GM13977 (cell line): ENCODE measurements at regions of chr1 and their contacts with region 1.

Region 1: DNA sequence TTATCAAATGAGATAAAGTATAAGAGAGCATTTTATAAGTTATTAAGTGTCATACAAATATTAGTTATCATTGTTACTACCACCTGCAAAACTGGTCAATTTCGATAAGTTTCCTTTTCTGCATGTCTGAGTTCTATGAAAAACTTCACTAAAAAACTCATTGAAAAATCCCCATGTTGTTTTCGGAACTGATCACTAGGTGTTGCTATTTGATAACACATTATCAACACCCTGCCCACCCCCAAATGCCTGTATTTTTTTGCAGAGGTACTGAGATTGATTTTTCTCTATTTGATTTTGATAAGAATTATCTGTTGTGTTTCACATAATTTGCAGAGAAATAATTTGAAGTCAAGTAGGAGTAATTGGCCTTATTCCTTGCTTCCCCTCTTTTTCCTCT is 22.1 kb upstream of the DISP1 start:
- DNase-seq: peak; percentile 44
- CTCF ChIP-seq: peak; percentile 37

Region 2: DNA sequence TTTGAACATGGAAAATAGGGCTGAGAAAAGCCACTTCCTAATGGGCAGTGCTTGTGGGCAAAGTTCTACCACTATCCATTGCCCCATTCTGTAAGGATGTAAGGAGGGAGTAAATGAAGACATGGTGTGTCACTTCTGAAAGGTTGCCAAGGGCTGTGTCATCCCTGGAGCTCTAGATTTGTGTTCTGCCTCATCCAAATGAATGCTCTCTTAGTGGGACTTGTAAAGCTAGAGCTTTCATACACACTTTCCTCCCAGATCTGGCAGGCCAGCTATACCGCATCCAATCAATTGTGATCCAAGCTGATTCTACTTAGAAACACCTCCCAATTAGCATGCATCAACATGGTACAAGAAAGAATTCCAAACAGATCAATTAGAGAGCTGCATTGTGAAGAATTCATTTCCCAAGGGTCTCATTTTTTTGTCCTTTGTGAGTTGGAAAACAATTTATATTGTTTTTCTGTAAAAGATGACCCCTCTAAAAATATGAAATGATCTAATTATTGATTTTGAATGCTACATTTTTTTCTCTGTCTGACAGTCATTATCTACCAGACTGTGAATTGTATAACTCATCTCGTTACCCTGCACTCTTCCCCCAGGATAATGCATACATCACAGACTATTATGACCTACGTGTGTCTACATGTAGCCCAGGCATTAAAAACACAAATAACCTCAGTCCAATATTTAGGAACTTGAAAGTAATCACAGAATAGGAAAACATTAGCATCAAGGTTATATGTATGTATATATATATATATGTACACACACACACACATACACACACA is 933.7 kb before region 1 on chr1:
- in situ Hi-C with region 1: no loop called
- DNase-seq: no peak
- CTCF ChIP-seq: no peak

Region 3: GRCh38 chr1:222600281-222600680 is 192.5 kb before region 1 on chr1:
- in situ Hi-C with region 1: no loop called
- DNase-seq: no peak
- CTCF ChIP-seq: no peak

Region 4: DNA sequence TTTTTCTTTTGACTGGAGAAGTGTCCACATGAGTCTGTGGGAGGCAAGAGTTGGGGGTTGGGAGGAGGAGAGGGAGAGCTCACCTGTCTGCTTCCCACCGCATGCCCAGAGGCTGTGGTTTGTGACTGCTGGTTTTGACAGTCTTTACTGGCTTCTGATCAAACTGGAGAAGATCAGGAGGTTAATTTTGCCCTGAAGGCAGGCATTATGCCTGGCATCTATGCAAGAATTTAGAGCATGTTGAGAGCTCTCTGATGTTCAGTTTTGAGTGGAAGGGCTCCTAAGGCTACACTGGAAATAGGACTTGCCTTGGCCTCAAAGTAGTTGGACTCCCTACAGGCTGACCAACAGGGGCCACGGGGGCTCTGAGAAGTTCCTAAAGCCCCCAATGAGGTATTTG is 248.7 kb after region 1 on chr1:
- in situ Hi-C with region 1: no loop called
- DNase-seq: no peak
- CTCF ChIP-seq: no peak

Region 5: DNA sequence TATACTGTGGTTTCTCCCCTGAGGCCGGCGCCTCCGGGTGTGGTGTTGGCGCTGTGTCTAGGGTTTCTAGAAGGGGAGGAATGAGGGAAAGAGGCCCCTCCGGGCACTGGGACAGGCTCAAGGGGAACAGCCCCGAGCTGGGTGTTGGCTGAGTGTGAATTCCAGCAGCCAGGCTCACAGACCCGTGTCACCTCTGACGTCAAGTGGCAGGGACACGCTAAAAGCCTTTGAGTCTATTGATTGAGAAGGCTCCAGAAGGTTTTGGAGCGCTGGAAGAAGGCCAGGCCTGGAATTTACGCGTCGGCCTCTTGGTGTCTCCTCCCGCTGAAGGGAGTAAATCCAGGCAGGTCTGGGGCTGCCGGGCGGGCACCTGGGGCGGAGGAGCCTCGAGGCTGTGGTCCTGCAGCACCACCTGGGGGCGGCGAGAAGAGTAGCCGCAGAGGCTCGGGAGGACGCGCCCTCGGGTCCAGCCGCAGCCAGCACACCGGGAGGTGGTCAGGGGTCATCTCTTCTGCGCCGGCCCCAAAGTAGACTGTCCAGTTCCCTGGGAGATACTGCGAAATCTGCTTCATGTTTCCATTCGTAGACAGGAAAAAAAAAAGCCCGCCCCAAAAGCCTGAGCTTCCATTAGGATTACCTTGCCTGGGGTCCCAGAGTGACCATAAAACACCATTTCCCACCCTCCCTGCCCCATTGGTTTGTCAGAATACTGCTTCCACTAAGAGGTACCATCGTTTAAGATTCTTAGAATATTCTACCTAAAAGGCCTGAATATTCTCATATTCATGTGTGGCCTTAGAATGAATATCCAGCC is 288.6 kb after region 1 on chr1:
- in situ Hi-C with region 1: loop called (anchors 25 kb)
- DNase-seq: peak; percentile 82
- CTCF ChIP-seq: peak; percentile 88

Region 6: DNA sequence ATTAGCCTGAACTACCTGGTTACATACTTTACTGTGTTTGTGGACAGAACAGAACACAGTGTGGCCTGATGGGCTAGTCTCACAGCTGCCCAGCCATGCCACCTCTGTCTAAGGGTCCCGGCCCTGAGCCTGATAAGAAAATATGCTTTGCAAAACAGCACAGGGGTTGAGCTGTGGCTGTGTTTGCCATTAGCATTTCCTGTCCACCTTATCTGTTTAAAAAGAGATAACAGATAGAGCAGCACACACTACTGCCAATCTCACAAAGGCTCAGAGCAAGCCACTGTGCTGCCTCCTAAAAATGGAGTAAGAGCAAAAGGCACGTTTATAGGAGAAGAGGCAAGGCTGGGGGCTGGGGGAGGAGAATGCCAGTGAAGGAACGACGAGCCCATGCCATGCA is 476.3 kb after region 1 on chr1:
- in situ Hi-C with region 1: no loop called
- DNase-seq: no peak
- CTCF ChIP-seq: no peak